AG04450 (cell line): ENCODE measurements at regions of chr6 and their contacts with region 1.

Region 1: GRCh38 chr6:99868074-99868702 is 125.8 kb downstream of the MCHR2 start:
- DNase-seq: peak; percentile 36
- H3K4me3 ChIP-seq: no peak overlapping the region
- H3K27ac ChIP-seq: no peak overlapping the region
- H3K27me3 ChIP-seq: peaks cover 10% of the 10 kb centered on the region
- CTCF ChIP-seq: peak; percentile 88

Region 2: DNA sequence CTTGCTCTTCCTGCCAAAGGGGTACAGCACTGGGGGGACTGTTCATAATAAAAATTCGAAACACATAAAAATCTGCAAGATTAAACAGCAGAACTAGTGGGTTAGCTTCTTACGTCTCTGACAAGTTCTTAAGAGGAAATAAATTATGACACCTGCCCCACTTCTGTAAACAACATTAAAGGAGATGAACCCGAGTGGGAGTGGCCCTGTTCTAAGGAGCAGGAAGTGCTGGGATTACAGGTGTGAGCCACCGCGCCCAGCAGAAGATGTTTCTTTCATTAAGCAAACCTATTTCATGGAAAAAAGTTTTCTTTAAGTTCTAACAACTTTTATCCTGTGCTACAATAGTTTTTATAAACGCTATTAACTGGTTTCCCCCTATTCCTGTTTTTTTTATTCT is 377.6 kb before region 1 on chr6:
- CTCF ChIA-PET with region 1: no interaction called
- POLR2A ChIA-PET with region 1: no interaction called
- DNase-seq: no peak
- H3K4me3 ChIP-seq: no peak overlapping the region
- H3K27ac ChIP-seq: no peak overlapping the region
- H3K27me3 ChIP-seq: no peaks in the 10 kb centered on the region
- CTCF ChIP-seq: no peak

Region 3: GRCh38 chr6:99852031-99852430 is 16.2 kb before region 1 on chr6:
- CTCF ChIA-PET with region 1: interaction called, 23 read pairs
- POLR2A ChIA-PET with region 1: no interaction called
- DNase-seq: no peak
- H3K4me3 ChIP-seq: no peak overlapping the region
- H3K27ac ChIP-seq: no peak overlapping the region
- H3K27me3 ChIP-seq: no peaks in the 10 kb centered on the region
- CTCF ChIP-seq: no peak

Region 4: GRCh38 chr6:99905209-99906106 is 37.3 kb after region 1 on chr6:
- CTCF ChIA-PET with region 1: interaction called, 97 read pairs
- POLR2A ChIA-PET with region 1: no interaction called
- DNase-seq: no peak
- H3K4me3 ChIP-seq: no peak overlapping the region
- H3K27ac ChIP-seq: no peak overlapping the region
- H3K27me3 ChIP-seq: peaks cover 4% of the 10 kb centered on the region
- CTCF ChIP-seq: peak; percentile 74

Region 5: DNA sequence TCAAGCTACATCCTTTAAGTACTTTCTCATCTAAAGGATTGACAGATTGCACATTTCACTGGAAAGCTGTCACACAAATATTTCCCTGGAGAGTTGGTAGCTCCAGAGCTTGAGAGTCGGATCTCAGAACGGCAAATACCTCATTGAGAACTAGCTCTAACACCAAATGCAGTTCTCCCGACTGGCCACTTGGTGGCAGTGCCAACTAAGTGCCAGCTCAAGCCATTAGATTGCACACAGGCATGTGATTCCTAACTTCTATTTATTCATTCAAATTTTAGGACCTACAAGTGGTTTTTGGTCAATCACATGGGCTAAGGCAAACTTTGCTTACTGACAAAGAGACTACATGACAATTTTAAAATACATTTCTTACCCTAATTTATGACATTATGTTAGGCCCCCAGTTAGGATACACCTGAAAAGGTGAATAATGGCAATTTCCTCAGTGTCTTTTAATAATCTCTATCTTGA is 133.8 kb after region 1 on chr6:
- CTCF ChIA-PET with region 1: interaction called, 49 read pairs
- POLR2A ChIA-PET with region 1: no interaction called
- DNase-seq: peak; percentile 21
- H3K4me3 ChIP-seq: no peak overlapping the region
- H3K27ac ChIP-seq: no peak overlapping the region
- H3K27me3 ChIP-seq: peaks cover 5% of the 10 kb centered on the region
- CTCF ChIP-seq: peak; percentile 95

Region 6: GRCh38 chr6:100099189-100100074 is 231.2 kb after region 1 on chr6:
- CTCF ChIA-PET with region 1: interaction called, 359 read pairs
- POLR2A ChIA-PET with region 1: no interaction called
- DNase-seq: no peak
- H3K4me3 ChIP-seq: no peak overlapping the region
- H3K27ac ChIP-seq: no peak overlapping the region
- H3K27me3 ChIP-seq: no peaks in the 10 kb centered on the region
- CTCF ChIP-seq: peak; percentile 64